Naive thymus-derived CD4-positive, alpha-beta T cell (primary cell): ENCODE measurements at regions of chr2 and their contacts with region 1.

Region 1: GRCh38 chr2:80050246-80050645 is 254.3 kb downstream of the LRRTM1 start:
- DNase-seq: no peak
- ATAC-seq: no peak
- H3K4me3 ChIP-seq: no peak overlapping the region
- H3K4me3 Mint-ChIP-seq: no peak overlapping the region
- H3K27ac ChIP-seq: no peak overlapping the region
- H3K27ac Mint-ChIP-seq: no peak overlapping the region
- H3K4me1 ChIP-seq: no peaks in the 10 kb centered on the region
- H3K4me1 Mint-ChIP-seq: no peaks in the 10 kb centered on the region
- H3K27me3 ChIP-seq: no peaks in the 10 kb centered on the region
- H3K27me3 Mint-ChIP-seq: peaks cover 0 to 4% (median 0%) of the 10 kb centered on the region in 5 donors

Region 2: DNA sequence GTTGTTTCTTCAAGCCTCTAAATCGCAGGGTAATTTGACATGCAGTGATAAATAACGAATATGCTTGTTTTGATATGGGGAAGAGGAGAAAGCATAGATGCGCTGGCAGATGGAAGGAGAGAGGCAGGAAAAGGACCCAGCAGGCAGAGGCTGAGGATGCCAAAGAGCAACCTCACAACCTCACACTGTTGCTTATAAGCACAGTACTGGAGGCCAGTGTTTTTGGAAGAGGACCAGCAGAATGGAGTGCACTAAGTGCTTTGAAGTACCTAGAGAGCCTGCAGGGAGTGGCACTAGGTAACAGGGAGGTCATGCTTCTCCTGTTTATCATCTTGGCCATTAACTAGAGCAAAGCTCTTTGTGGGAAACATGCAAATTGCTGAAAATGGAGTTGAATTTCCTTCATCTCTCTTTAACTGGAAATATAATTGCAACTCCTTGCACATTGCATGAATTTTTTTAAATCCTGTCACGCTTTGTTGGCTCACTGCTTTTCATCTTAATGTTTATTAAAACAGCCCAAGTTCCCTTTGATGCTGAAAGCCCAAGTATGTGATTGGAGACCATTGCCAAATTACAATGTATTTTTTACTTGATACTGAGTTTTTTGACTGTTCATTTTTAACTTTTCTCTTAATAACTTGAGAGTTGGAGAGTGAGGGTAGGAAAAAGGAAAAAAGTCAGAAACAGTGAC is 17.9 kb after region 1 on chr2:
- CTCF ChIA-PET with region 1: no interaction called
- POLR2A ChIA-PET with region 1: no interaction called
- intact Hi-C with region 1: loop called in 1 of 2 experiments (anchors 1 kb)
- DNase-seq: no peak
- ATAC-seq: no peak
- H3K4me3 ChIP-seq: no peak overlapping the region
- H3K4me3 Mint-ChIP-seq: no peak overlapping the region
- H3K27ac ChIP-seq: no peak overlapping the region
- H3K27ac Mint-ChIP-seq: no peak overlapping the region
- H3K4me1 ChIP-seq: no peaks in the 10 kb centered on the region
- H3K4me1 Mint-ChIP-seq: no peaks in the 10 kb centered on the region
- H3K27me3 ChIP-seq: no peaks in the 10 kb centered on the region
- H3K27me3 Mint-ChIP-seq: peaks cover 0 to 14% (median 4%) of the 10 kb centered on the region in 5 donors